ENCODE measurements at regions of chr7 and their contacts with region 1.

Region 1: GRCh38 chr7:56229631-56230030 is 113.4 kb upstream of the NUPR2 start:
- DNase-seq: no peak

Region 2: DNA sequence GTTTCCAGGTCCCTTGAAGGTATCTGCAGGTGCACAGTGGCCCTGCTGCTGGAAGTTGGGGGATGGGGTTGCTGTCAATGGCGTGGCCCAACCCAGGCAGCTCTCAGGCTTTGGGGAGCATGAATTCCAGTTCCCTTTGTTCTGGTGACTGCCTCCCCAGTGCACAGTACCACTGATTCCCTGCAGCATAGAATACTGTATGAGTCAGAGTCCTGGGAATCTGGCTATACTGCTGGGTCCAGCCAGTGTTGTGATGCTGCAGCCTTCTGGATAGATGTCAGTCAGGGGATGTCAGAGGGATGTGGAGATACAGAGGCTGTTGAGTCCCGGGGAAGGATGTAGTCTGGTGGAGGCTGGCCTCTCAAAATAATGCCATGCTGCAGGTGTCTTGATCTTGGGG is 765.2 kb before region 1 on chr7:
- intact Hi-C with region 1: no loop called
- DNase-seq: no peak

Region 3: GRCh38 chr7:55493408-55493807 is 736.2 kb before region 1 on chr7:
- intact Hi-C with region 1: no loop called
- DNase-seq: no peak

Region 4: DNA sequence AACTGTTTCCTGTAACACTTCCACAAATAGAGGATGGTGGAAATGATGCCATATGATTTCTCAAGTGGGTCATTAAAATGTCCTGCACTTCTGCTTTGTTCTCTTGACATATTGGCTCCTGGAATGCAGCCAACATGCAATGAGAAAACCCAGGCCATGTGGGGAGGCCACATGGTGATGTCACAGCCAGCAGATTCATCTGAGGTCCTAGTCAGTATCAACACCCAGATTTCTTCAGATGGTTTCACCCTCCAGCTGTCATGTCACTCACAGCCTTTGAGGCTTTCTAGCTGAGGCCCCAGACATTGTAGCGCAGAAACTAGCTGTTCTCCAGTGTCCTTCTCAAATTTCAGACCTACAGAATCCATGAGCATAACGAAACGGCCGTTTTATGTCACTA is 11.1 kb before region 1 on chr7:
- intact Hi-C with region 1: loop called in 1 of 2 experiments (anchors 1 kb)
- DNase-seq: no peak

Measured in posterior vena cava (tissue), 2 donors.